Dendritic cell treated with granulocyte-macrophage colony-stimulating factor and Interleukin-4, amounts not matched to agents 40 ng/mL and 50 ng/mL, for 4 days (primary cell): ENCODE measurements at regions of chr1 and their contacts with region 1.

Region 1: GRCh38 chr1:222171005-222171404 is 376.9 kb downstream of the HHIPL2 start:
- H3K4me3 Mint-ChIP-seq: no peak overlapping the region
- H3K27ac Mint-ChIP-seq: no peak overlapping the region
- H3K4me1 Mint-ChIP-seq: no peaks in the 10 kb centered on the region
- H3K27me3 Mint-ChIP-seq: no peaks in the 10 kb centered on the region

Region 2: DNA sequence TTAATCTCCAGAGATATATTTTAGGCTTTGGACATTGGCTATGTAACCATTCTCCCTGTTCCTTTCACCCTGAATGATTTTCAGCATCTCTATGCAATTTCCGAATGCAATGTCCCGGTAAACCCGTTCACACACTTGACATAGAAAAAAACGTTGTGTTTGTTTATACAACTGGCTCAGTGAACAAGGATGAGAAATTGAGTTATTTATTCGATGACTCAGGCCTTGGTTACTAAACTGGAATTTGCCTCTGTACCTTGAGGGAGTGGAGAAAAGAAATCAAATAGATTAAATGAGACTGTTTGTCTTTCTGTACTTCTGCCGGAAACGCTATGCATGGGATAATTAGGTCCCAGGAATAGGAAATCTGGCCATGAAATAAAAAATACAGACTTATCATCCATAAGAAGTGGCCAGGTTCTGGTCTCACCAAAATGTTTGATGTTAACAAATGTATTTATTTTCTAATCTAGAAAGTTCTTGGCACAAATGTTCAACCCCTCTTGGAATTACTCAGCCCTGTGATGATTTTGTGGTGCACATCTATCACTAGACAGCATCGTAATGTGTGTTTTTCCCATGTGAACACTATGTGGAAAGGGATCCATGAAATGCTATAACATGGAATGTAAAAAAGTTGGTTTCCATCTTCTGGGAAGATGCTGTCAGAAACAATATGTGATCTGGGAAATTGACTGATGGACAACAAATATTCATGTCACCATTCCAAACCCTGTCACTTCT is 683.1 kb before region 1 on chr1:
- intact Hi-C with region 1: loop called (anchors 10 kb)
- H3K4me3 Mint-ChIP-seq: no peak overlapping the region
- H3K27ac Mint-ChIP-seq: no peak overlapping the region
- H3K4me1 Mint-ChIP-seq: no peaks in the 10 kb centered on the region
- H3K27me3 Mint-ChIP-seq: no peaks in the 10 kb centered on the region

Region 3: GRCh38 chr1:221543529-221544120 is 627.4 kb before region 1 on chr1:
- intact Hi-C with region 1: loop called (anchors 2 kb)
- H3K4me3 Mint-ChIP-seq: no peak overlapping the region
- H3K27ac Mint-ChIP-seq: no peak overlapping the region
- H3K4me1 Mint-ChIP-seq: peaks cover 7% of the 10 kb centered on the region
- H3K27me3 Mint-ChIP-seq: peaks cover under 1% of the 10 kb centered on the region

Region 4: DNA sequence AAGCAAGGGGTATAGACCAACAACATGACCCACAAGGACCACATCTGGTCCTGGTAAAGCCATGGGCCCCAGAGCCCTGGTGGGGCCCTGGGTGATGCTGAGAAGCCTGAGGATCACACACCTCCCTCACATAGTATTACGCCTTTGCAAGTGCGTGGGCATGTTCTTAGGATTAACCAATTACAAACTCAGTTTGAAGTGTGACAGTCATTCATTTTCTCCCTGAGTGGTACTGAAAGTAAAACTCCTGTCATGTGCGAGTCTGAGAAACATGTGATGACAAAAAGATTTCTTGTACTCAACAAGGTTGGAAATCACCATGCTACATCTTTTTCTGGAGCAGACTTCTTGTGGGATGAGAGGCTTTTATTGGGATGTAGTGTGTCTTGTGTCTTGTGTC is 113.8 kb before region 1 on chr1:
- intact Hi-C with region 1: no loop called
- H3K4me3 Mint-ChIP-seq: no peak overlapping the region
- H3K27ac Mint-ChIP-seq: no peak overlapping the region
- H3K4me1 Mint-ChIP-seq: no peaks in the 10 kb centered on the region
- H3K27me3 Mint-ChIP-seq: no peaks in the 10 kb centered on the region